ENCODE measurements at regions of chr20 and their contacts with region 1.

Region 1: GRCh38 chr20:23629017-23629541 is 8.7 kb downstream of the CST3 start:
- DNase-seq: peak; percentile 98
- ATAC-seq: peak; percentile 87
- H3K4me3 ChIP-seq: peak overlapping the region in 1 of 3 experiments; percentile 39; a peak in 1 of 6 replicates
- H3K27ac ChIP-seq: peak overlapping the region; percentile 70
- H3K4me1 ChIP-seq: peaks cover 80% of the 10 kb centered on the region
- H3K27me3 ChIP-seq: no peaks in the 10 kb centered on the region
- CTCF ChIP-seq: peak; percentile 31
- EP300 ChIP-seq: peak; percentile 76 to 80; a peak in 3 of 4 replicates
- POLR2A ChIP-seq: peak; percentile 40 to 50; a peak in 1 of 4 replicates
- RAD21 ChIP-seq: no peak; the same call in 1 of the 2 replicates

Region 2: DNA sequence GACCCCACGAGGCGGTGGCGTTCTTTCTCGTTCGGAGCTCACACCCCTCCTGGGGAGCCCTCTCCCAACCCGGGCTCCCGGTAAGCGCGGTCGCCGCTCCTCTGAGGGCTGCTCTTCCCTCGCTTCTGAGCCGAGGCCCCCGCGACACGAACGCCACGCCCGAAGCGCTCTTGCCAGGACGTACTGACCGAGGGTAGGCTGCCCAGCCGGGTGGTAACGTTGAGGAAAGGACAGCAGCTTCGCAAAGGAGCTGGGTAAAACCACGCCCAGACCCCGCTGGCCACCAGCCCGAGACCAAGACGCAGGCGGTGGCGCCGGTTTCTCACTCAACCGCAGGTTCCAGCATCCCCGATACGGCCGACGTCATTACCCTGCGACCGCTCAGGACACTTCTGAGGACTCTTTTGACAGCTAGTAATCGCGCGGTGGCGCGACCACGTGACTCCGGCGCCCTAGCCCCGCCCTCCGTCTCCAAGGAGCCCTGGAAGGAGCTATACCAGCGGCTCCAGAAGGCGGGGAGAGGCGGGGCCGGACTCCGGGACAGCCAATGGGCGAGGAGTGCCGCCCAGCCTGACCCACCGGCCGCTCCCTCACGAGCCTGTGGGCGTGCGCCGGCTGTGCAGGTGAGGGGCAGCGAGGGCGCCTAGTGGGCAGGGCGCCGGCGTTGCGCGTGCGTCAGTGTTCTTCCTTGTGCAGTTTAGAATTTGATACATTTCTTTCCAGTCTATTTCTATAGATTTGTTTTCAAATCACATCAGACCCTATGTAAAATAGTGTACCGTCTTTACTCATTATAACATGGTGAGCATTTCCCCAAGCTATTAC is 271.1 kb before region 1 on chr20:
- CTCF ChIA-PET with region 1: no interaction called
- POLR2A ChIA-PET with region 1: interaction called, 10 read pairs
- in situ Hi-C with region 1: no loop called
- intact Hi-C with region 1: no loop called
- DNase-seq: peak; percentile 98
- ATAC-seq: peak; percentile 76
- H3K4me3 ChIP-seq: peak overlapping the region; percentile 55 to 91 (median 65)
- H3K27ac ChIP-seq: peak overlapping the region; percentile 77
- H3K4me1 ChIP-seq: peaks cover 45% of the 10 kb centered on the region
- H3K27me3 ChIP-seq: no peaks in the 10 kb centered on the region; a peak in 1 of 5 replicates
- CTCF ChIP-seq: peak; percentile 52
- EP300 ChIP-seq: 0 out of 4 replicates have a peak, but pooled peaks of 1 of the 2 experiments have one; percentile 9
- POLR2A ChIP-seq: peak; percentile 73 to 85
- RAD21 ChIP-seq: no peak; the same call in 1 of the 2 replicates

Region 3: GRCh38 chr20:23554401-23554800 is 74.7 kb before region 1 on chr20:
- CTCF ChIA-PET with region 1: no interaction called
- POLR2A ChIA-PET with region 1: no interaction called
- in situ Hi-C with region 1: no loop called
- intact Hi-C with region 1: no loop called
- DNase-seq: no peak
- ATAC-seq: no peak
- H3K4me3 ChIP-seq: no peak overlapping the region
- H3K27ac ChIP-seq: no peak overlapping the region
- H3K4me1 ChIP-seq: no peaks in the 10 kb centered on the region
- H3K27me3 ChIP-seq: no peaks in the 10 kb centered on the region
- CTCF ChIP-seq: no peak
- EP300 ChIP-seq: no peak
- POLR2A ChIP-seq: no peak
- RAD21 ChIP-seq: no peak

Region 4: GRCh38 chr20:23647346-23647745 is 18.3 kb after region 1 on chr20:
- CTCF ChIA-PET with region 1: no interaction called
- POLR2A ChIA-PET with region 1: interaction called, 12 read pairs
- in situ Hi-C with region 1: no loop called
- intact Hi-C with region 1: no loop called
- DNase-seq: no peak
- ATAC-seq: no peak
- H3K4me3 ChIP-seq: no peak overlapping the region
- H3K27ac ChIP-seq: no peak overlapping the region
- H3K4me1 ChIP-seq: peaks cover 35% of the 10 kb centered on the region
- H3K27me3 ChIP-seq: no peaks in the 10 kb centered on the region
- CTCF ChIP-seq: no peak
- EP300 ChIP-seq: no peak
- POLR2A ChIP-seq: no peak
- RAD21 ChIP-seq: no peak

Region 5: DNA sequence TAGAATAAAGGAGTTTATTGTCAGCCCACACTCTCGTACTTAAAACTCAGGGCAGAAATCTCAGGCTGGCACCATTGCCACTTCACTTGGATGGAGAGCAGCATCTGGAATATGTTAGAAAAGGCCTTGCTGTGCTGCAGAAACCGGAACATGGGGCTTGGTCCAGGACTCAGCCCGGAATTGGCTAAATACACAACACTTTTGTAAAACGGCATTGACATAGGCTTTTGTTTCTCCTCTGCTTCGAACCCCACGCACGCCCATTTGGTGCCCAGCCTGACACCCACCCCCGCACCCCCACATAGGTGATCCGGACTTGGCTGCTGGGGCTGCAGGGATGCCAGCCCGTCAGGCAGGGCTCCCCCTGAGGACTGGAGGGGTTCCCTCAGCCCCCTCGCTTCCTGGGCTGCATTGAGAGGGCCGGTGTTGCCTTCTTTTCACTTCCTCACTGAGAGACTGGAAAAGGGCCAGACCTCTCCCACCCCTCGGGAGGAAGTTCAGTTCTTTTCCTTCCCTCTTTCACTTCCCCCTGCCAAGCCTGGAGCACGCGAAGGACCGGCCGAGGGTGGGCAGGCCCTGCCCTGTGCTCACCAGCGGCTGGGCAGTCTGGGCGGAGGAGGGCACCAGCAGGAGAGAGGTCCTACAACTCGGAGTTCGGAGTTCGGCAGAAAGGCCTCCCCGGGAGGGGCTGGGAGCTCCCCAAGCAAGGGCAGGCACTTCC is 26.6 kb after region 1 on chr20:
- CTCF ChIA-PET with region 1: no interaction called
- POLR2A ChIA-PET with region 1: interaction called, 543 read pairs
- in situ Hi-C with region 1: no loop called
- intact Hi-C with region 1: loop called (anchors 5 kb)
- DNase-seq: no peak
- ATAC-seq: no peak
- H3K4me3 ChIP-seq: no peak overlapping the region
- H3K27ac ChIP-seq: no peak overlapping the region
- H3K4me1 ChIP-seq: peaks cover 89% of the 10 kb centered on the region
- H3K27me3 ChIP-seq: no peaks in the 10 kb centered on the region
- CTCF ChIP-seq: no peak
- EP300 ChIP-seq: no peak
- POLR2A ChIP-seq: no peak
- RAD21 ChIP-seq: no peak

Region 6: GRCh38 chr20:23663180-23663579 is 34.1 kb after region 1 on chr20:
- CTCF ChIA-PET with region 1: no interaction called
- POLR2A ChIA-PET with region 1: interaction called, 543 read pairs
- in situ Hi-C with region 1: no loop called
- intact Hi-C with region 1: loop called (anchors 5 kb)
- DNase-seq: no peak
- ATAC-seq: no peak
- H3K4me3 ChIP-seq: no peak overlapping the region
- H3K27ac ChIP-seq: peak overlapping the region; percentile 93
- H3K4me1 ChIP-seq: peaks cover 69% of the 10 kb centered on the region
- H3K27me3 ChIP-seq: no peaks in the 10 kb centered on the region
- CTCF ChIP-seq: no peak
- EP300 ChIP-seq: no peak
- POLR2A ChIP-seq: no peak
- RAD21 ChIP-seq: no peak

Region 7: GRCh38 chr20:23782366-23782985 is 153.4 kb after region 1 on chr20:
- CTCF ChIA-PET with region 1: no interaction called
- POLR2A ChIA-PET with region 1: no interaction called
- in situ Hi-C with region 1: no loop called
- intact Hi-C with region 1: no loop called
- DNase-seq: no peak
- ATAC-seq: peak; percentile 99
- H3K4me3 ChIP-seq: no peak overlapping the region
- H3K27ac ChIP-seq: no peak overlapping the region
- H3K4me1 ChIP-seq: no peaks in the 10 kb centered on the region
- H3K27me3 ChIP-seq: no peaks in the 10 kb centered on the region
- CTCF ChIP-seq: peak; percentile 50; the same call in 1 of the 2 replicates
- EP300 ChIP-seq: no peak
- POLR2A ChIP-seq: no peak
- RAD21 ChIP-seq: no peak

Measured in HepG2 (cell line).